ENCODE measurements at regions of chr7 and their contacts with region 1.

Region 1: DNA sequence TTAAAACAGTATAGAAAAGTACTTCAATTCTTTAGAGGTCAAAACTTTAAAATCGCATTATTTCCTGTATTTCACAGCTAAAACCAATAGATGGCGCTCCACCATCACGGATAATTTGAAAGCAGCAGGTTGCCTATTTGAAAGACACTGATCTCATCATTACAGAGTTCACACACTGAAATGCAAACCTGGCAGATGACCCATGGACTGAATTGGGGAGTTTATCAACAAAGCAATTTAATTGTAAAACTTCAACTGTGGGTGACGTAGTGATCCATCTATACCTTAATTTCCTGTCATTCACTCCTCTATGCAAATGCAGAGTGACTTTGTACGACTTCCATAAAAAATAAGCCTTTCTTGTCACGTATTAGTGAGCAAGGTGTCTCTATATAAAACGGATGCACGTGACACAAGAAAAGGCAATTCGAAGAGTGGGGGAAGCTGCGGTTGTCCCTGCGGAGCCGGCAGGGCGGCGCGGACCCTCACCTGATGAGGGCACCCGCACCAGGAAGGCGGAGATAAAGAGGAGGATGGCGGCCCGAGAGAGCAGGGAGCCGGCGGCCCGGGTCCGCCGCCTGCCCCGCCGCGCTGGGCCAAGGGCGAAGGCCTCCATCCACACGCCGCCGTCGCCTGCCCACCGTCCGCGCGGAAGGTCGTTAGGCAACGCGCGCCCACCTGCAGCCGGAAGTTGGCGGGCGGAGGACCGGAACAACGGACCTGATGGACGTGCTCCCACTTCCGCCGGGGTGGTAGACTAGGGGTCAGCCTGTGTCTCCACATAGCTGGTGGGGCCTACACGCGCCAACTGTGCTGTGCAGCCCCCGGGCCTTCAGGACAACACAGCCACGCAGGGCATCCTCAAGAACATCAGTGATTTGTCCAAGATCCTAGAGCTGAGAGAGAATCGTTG is at the start of gene ZPBP:
- DNase-seq: peak; percentile 62 to 72 (median 69)
- H3K4me3 ChIP-seq: peak within 1 kb of the TSS; percentile 44 to 66
- H3K4me3 Mint-ChIP-seq: peak within 1 kb of the TSS; percentile 88 to 95 (median 88)
- H3K27ac ChIP-seq: peak within 1 kb of the TSS; percentile 23
- H3K27ac Mint-ChIP-seq: peak within 1 kb of the TSS; percentile 45 to 88 (median 80)
- H3K4me1 ChIP-seq: peaks cover 4% of the 10 kb centered on the region
- H3K4me1 Mint-ChIP-seq: peaks cover 4 to 7% (median 7%) of the 10 kb centered on the region in 4 donors
- H3K27me3 ChIP-seq: no peaks in the 10 kb centered on the region
- H3K27me3 Mint-ChIP-seq: no peaks in the 10 kb centered on the region
- total RNA-seq, gene ZPBP: not detected

Region 2: GRCh38 chr7:50068961-50069551 is 23.8 kb before region 1 on chr7:
- CTCF ChIA-PET with region 1: interaction called, 33 read pairs
- POLR2A ChIA-PET with region 1: no interaction called
- intact Hi-C with region 1: no loop called
- DNase-seq: peak; percentile 33 to 48 (median 36)
- H3K4me3 ChIP-seq: peak overlapping the region; percentile 51 to 93
- H3K4me3 Mint-ChIP-seq: peak overlapping the region; percentile 87 to 96 (median 92)
- H3K27ac ChIP-seq: peak overlapping the region; percentile 46
- H3K27ac Mint-ChIP-seq: peak overlapping the region; percentile 64 to 97 (median 92)
- H3K4me1 ChIP-seq: peaks cover 15% of the 10 kb centered on the region
- H3K4me1 Mint-ChIP-seq: peaks cover 17 to 28% (median 22%) of the 10 kb centered on the region in 4 donors
- H3K27me3 ChIP-seq: no peaks in the 10 kb centered on the region
- H3K27me3 Mint-ChIP-seq: peaks cover 0 to 4% of the 10 kb centered on the region in 2 donors

Region 3: GRCh38 chr7:50449881-50450589 is 357.2 kb after region 1 on chr7 and contains the start of gene FIGNL1:
- CTCF ChIA-PET with region 1: interaction called, 3 read pairs
- POLR2A ChIA-PET with region 1: no interaction called
- intact Hi-C with region 1: loop called (anchors 1 kb)
- DNase-seq: peak; percentile 77 to 85 (median 83)
- H3K4me3 ChIP-seq: peak within 1 kb of the TSS; percentile 66 to 73
- H3K4me3 Mint-ChIP-seq: peak within 1 kb of the TSS; percentile 87 to 97 (median 92)
- H3K27ac ChIP-seq: peak within 1 kb of the TSS; percentile 79
- H3K27ac Mint-ChIP-seq: peak within 1 kb of the TSS; percentile 17 to 99 (median 96)
- H3K4me1 ChIP-seq: peaks cover 20% of the 10 kb centered on the region
- H3K4me1 Mint-ChIP-seq: peaks cover 17 to 28% (median 19%) of the 10 kb centered on the region in 4 donors
- H3K27me3 ChIP-seq: no peaks in the 10 kb centered on the region
- H3K27me3 Mint-ChIP-seq: no peaks in the 10 kb centered on the region
- total RNA-seq, gene FIGNL1: 16.2 to 17.1 TPM

Region 4: GRCh38 chr7:50745336-50745735 is 652.5 kb after region 1 on chr7:
- CTCF ChIA-PET with region 1: no interaction called
- POLR2A ChIA-PET with region 1: no interaction called
- intact Hi-C with region 1: no loop called
- DNase-seq: no peak
- H3K4me3 ChIP-seq: no peak overlapping the region
- H3K4me3 Mint-ChIP-seq: no peak overlapping the region
- H3K27ac ChIP-seq: no peak overlapping the region
- H3K27ac Mint-ChIP-seq: no peak overlapping the region
- H3K4me1 ChIP-seq: peaks cover 7% of the 10 kb centered on the region
- H3K4me1 Mint-ChIP-seq: peaks cover 8 to 20% (median 13%) of the 10 kb centered on the region in 4 donors
- H3K27me3 ChIP-seq: no peaks in the 10 kb centered on the region
- H3K27me3 Mint-ChIP-seq: no peaks in the 10 kb centered on the region

Measured in CD4-positive, alpha-beta memory T cell (primary cell).